Activated CD4-positive, alpha-beta T cell treated with anti-CD3 and anti-CD28 coated beads, Interleukin-2, amount 10 ng/mL, durations not matched to agents 24 days and 14 days (primary cell): ENCODE measurements at regions of chr17 and their contacts with region 1.

Region 1: GRCh38 chr17:78289802-78290363 is 58.5 kb downstream of the TMEM235 start:
- DNase-seq: peak; percentile 92
- H3K4me3 Mint-ChIP-seq: no peak overlapping the region
- H3K27ac Mint-ChIP-seq: no peak overlapping the region
- H3K4me1 Mint-ChIP-seq: peaks cover 7% of the 10 kb centered on the region
- H3K27me3 Mint-ChIP-seq: no peaks in the 10 kb centered on the region

Region 2: DNA sequence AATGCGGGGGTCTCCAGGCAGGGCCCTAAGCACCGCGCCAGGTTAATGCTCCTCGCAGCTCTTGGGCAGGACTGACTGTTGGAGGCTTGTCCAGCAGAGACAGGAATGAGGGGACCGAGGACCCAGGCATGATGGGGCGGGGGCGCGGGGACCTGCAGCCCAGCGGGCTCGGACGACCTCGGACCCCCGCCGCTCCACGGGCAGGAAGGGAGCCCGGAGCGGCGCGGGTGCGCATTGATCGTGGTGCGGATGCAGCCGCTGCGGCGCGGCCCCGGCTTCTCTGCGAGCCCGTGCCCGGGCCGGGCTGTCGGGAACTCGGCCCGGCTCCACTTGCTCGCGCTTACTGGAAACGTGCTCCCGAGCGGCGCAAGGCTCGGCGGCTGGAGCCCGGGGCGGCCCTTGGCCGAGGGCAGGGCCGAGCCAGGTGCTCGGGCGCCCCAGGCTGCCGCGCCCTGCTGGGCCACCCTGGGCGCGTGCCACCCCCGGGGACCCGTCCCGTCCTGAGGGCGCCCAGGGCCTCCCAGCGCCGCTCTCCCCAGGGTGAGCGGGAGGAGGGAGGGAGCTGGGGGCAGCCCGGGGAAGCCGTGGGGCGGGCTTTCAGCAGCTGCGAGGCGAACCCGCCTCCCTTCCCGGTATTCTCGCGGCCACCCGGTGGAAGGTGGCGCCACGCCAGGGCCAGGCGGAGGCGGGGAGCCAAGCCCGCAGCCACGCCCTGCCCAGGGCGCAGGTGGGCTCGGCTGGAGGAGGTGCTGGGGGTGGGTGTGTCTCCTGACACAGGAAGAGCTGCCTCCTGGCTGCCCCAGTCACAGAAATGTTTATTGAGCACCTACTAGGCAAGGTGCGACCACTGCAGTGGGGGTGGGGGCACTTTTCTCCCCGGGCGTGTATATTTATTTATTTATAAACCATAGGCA is 24.1 kb after region 1 on chr17:
- intact Hi-C with region 1: loop called (anchors 2 kb)
- DNase-seq: peak; percentile 93
- H3K4me3 Mint-ChIP-seq: peak overlapping the region; percentile 73
- H3K27ac Mint-ChIP-seq: peak overlapping the region; percentile 60
- H3K4me1 Mint-ChIP-seq: peaks cover 42% of the 10 kb centered on the region
- H3K27me3 Mint-ChIP-seq: peaks cover 13% of the 10 kb centered on the region

Region 3: DNA sequence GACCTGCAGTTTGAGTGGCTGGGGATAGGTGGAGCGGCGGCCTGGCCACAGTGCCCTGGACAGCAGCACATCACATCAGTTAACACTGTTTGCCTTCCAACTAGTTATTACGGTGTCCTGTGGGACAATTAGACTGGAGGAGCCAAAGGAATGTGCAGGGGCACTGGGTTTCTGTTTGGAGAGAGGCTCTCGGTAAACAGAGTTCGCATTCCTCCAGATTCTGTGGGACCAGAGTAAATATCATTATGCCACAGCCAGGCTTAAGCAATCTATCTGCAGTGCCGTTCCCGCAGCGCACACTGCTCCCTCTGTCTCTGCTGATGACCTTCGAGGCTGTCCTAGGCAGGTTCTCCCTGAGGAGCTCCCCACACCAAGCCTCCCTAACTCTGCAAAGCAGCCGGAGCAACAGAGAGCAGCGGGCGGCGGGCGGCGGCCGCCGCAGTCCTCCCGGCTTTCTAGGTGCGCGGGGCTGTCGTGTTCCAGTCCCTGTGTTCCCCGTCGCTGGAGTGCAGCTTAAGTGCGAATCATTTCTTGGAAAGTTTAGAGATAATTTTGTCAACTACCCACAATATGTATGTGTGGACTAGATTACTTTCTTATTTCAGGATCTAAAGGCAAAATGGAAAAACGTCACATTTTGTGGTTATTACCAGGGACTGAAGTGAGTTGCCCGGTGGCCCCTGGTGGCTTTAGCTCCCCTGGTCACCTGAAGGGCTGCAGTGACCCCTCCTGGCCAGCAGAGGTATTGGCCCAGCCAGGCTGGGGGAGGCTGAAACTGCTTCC is 131.8 kb after region 1 on chr17:
- intact Hi-C with region 1: loop called (anchors 1 kb)
- DNase-seq: peak; percentile 93
- H3K4me3 Mint-ChIP-seq: no peak overlapping the region
- H3K27ac Mint-ChIP-seq: peak overlapping the region; percentile 77
- H3K4me1 Mint-ChIP-seq: peaks cover 41% of the 10 kb centered on the region
- H3K27me3 Mint-ChIP-seq: no peaks in the 10 kb centered on the region